Endothelial cell of umbilical vein (primary cell): ENCODE measurements at regions of chr1 and their contacts with region 1.

Region 1: GRCh38 chr1:22416555-22417454 is 34.8 kb upstream of the ZBTB40 start:
- DNase-seq: peak; percentile 79
- H3K4me3 ChIP-seq: no peak overlapping the region
- H3K27ac ChIP-seq: no peak overlapping the region
- H3K4me1 ChIP-seq: peaks cover 24% of the 10 kb centered on the region
- H3K27me3 ChIP-seq: peaks cover 15 to 18% of the 10 kb centered on the region in 2 experiments
- CTCF ChIP-seq: peak; percentile 93 to 97
- POLR2A ChIP-seq: no peak

Region 2: GRCh38 chr1:22025368-22026155 is 391.2 kb before region 1 on chr1:
- CTCF ChIA-PET with region 1: interaction called, 7 read pairs
- POLR2A ChIA-PET with region 1: no interaction called
- dilution Hi-C with region 1: no loop called
- intact Hi-C with region 1: loop called (anchors 2 kb)
- DNase-seq: peak; percentile 88
- H3K4me3 ChIP-seq: peak overlapping the region; percentile 50 to 99 (median 77)
- H3K27ac ChIP-seq: peak overlapping the region; percentile 90
- H3K4me1 ChIP-seq: peaks cover 12% of the 10 kb centered on the region
- H3K27me3 ChIP-seq: no peaks in the 10 kb centered on the region
- CTCF ChIP-seq: no peak
- POLR2A ChIP-seq: peak; percentile 86

Region 3: DNA sequence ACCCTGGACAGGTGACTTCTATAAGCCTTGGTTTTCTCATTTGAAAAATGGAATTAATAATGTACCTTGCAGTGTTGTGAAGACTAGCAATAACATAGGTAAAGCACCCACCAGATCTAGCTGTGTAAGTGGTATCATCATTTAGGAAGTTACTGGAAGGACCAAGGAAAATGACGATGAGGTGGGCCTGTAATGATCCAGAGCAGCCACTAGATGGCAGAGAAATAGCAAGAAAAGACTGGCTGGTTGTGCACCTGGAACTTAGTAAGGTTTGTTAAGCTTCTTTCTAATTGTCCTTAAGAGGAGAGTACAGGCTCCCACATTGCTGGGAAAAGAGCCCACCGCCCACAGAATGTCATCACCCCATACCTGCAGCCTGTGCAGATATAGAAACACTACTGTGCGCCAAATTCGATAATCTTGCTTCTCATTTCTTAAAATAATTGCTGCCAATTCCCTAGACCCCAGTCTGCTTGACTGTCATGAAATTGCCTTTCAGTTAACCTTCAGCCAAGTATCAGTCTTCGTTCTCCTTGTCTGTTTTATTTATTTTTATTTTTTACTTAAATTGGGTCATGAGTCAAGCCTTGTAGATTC is 311.1 kb before region 1 on chr1:
- CTCF ChIA-PET with region 1: interaction called, 50 read pairs
- POLR2A ChIA-PET with region 1: no interaction called
- dilution Hi-C with region 1: no loop called
- intact Hi-C with region 1: loop called (anchors 1 kb)
- DNase-seq: peak; percentile 62
- H3K4me3 ChIP-seq: no peak overlapping the region
- H3K27ac ChIP-seq: no peak overlapping the region
- H3K4me1 ChIP-seq: peaks cover 14% of the 10 kb centered on the region
- H3K27me3 ChIP-seq: no peaks in the 10 kb centered on the region
- CTCF ChIP-seq: peak; percentile 66 to 76
- POLR2A ChIP-seq: no peak

Region 4: DNA sequence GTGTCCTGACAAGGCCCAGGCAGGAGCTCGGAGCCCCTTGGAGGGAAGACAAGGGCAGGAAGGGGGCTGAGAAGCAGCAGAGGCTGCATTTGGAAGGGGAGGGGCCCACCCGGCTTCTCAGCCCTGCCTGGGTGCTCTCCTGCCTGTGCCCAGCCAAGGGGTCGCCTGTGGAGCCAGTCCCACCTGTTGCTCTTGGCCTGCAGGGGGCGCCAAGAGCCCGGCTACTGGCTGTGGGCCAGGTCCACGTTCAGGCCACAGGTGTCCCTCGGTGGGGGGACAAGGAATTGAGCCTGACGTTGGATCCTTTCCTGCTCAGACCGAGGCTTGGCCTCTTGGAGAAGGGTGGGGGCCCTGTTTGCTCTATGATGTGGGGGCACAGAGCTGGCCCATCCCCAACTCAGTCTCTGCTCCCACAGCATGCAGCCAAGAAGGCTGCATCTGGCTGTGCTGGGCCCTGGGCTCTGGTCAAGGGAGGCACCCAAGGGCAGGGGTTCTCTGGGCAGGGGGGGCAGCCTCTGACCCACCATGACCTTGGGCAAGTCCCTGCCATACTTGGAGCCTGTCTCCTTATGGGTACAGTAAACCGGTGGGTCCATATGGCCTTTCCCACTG is 284.8 kb before region 1 on chr1:
- CTCF ChIA-PET with region 1: interaction called, 38 read pairs
- POLR2A ChIA-PET with region 1: no interaction called
- dilution Hi-C with region 1: no loop called
- intact Hi-C with region 1: loop called (anchors 1 kb)
- DNase-seq: peak; percentile 37
- H3K4me3 ChIP-seq: no peak overlapping the region
- H3K27ac ChIP-seq: no peak overlapping the region
- H3K4me1 ChIP-seq: peaks cover 13% of the 10 kb centered on the region
- H3K27me3 ChIP-seq: no peaks in the 10 kb centered on the region
- CTCF ChIP-seq: peak; percentile 87 to 94
- POLR2A ChIP-seq: no peak

Region 5: GRCh38 chr1:22380024-22380785 is 36.6 kb before region 1 on chr1:
- CTCF ChIA-PET with region 1: no interaction called
- POLR2A ChIA-PET with region 1: no interaction called
- dilution Hi-C with region 1: no loop called
- intact Hi-C with region 1: no loop called
- DNase-seq: no peak
- H3K4me3 ChIP-seq: no peak overlapping the region
- H3K27ac ChIP-seq: no peak overlapping the region
- H3K4me1 ChIP-seq: no peaks in the 10 kb centered on the region
- H3K27me3 ChIP-seq: peaks cover 4 to 6% of the 10 kb centered on the region in 2 experiments
- CTCF ChIP-seq: no peak
- POLR2A ChIP-seq: no peak

Region 6: GRCh38 chr1:22641906-22642636 is 225.3 kb after region 1 on chr1:
- CTCF ChIA-PET with region 1: interaction called, 154 read pairs
- POLR2A ChIA-PET with region 1: no interaction called
- dilution Hi-C with region 1: no loop called
- intact Hi-C with region 1: loop called (anchors 1 kb)
- DNase-seq: peak; percentile 43
- H3K4me3 ChIP-seq: no peak overlapping the region
- H3K27ac ChIP-seq: no peak overlapping the region
- H3K4me1 ChIP-seq: no peaks in the 10 kb centered on the region
- H3K27me3 ChIP-seq: no peaks in the 10 kb centered on the region
- CTCF ChIP-seq: peak; percentile 85 to 94
- POLR2A ChIP-seq: no peak